ENCODE measurements at regions of chr11 and their contacts with region 1.

Region 1: DNA sequence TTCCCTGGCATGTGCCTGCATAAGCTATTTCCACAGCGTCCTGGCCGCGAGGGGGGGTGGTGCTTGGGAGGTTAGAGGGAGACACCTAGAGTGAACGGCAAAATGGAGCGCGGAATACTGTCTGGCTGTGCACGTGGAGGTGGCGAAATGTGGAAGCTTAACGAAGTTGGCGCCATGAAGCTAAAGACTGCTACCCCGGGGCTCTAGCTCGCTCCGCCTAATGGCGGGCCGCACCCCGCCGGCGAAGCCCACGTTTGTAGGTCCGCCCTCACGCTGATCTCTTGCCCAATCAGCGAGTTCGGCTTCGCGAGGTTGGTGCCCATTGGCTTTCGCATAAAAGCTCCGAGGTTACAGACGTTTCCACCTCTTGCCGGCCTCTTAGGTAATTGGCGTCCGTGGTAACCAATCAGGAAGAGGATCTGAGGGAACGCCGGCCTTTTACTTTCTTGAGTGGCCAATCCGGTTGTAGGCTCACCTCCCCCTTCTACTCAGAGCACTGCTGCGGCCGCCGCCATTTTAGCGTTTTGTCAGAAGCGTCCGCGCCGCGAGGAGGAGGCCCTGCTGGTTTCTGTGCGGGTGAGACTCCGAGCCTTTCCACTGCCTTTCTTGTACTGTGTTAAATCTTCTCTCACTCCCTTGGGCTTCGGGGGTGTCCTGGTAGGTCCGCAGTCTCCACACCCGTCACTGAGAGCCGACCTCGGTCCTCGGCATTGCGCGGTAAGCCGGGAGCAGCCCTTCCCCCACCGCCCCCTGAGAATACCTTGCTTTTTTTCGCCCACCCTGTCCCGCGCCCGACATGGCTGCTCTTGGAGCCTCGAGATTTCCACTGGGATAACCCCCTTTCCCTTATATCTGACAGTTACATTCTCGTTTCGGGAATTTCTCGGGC is at the start of gene RBM4:
- DNase-seq: peak; percentile 90 to 99 (median 94)
- ATAC-seq: peak; percentile 89
- H3K4me3 ChIP-seq: peak within 1 kb of the TSS; percentile 82
- H3K4me3 Mint-ChIP-seq: peak within 1 kb of the TSS; percentile 97
- H3K27ac ChIP-seq: peak within 1 kb of the TSS; percentile 94
- H3K27ac Mint-ChIP-seq: peak within 1 kb of the TSS; percentile 89
- H3K4me1 ChIP-seq: peaks cover 62% of the 10 kb centered on the region
- H3K4me1 Mint-ChIP-seq: peaks cover 73% of the 10 kb centered on the region
- H3K27me3 ChIP-seq: no peaks in the 10 kb centered on the region
- H3K27me3 Mint-ChIP-seq: no peaks in the 10 kb centered on the region
- CTCF ChIP-seq: no peak
- total RNA-seq, gene RBM4: 194 to 197 TPM

Region 2: GRCh38 chr11:66454249-66454648 is 184.2 kb before region 1 on chr11:
- CTCF ChIA-PET with region 1: no interaction called
- POLR2A ChIA-PET with region 1: no interaction called
- intact Hi-C with region 1: no loop called
- DNase-seq: peak in 1 of 14 experiments; percentile 19
- ATAC-seq: no peak
- H3K4me3 ChIP-seq: no peak overlapping the region
- H3K4me3 Mint-ChIP-seq: no peak overlapping the region
- H3K27ac ChIP-seq: no peak overlapping the region
- H3K27ac Mint-ChIP-seq: no peak overlapping the region
- H3K4me1 ChIP-seq: peaks cover 10% of the 10 kb centered on the region
- H3K4me1 Mint-ChIP-seq: peaks cover 14% of the 10 kb centered on the region
- H3K27me3 ChIP-seq: no peaks in the 10 kb centered on the region
- H3K27me3 Mint-ChIP-seq: peaks cover 8% of the 10 kb centered on the region
- CTCF ChIP-seq: no peak

Region 3: DNA sequence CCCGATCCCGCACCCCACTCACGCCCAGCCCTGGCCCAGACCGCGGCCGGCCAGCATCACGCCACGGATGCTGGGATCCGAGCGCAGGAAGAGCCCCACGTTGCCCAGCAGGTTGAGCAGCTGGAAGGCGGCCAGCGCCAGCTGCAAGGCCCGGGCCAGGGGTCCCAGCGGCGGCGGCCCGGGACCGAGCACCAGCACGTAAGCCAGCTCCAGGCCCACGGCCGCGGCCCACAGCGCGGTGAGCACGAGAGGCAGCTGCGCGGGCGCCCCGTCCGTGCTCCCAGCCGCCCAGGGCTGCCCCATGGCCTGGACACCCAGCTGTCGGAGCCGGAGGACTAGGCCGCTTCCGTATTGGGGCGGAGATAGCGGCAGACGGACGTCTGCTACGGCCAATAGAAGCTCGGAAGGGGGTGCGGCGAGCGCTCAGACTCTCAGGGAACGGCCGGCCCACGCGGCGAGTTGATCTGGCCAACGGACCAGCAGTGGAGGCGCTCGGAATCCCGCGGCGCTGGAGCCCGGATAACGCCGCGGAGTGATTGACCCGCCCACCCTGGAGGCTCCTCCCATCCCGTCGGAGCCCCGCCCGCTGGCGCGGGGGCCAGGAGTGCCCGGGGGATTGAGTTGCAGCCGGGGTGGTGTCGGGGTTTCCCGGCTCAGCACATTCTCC is 92.6 kb before region 1 on chr11 and contains the start of gene ZDHHC24:
- CTCF ChIA-PET with region 1: interaction called, 3 read pairs
- POLR2A ChIA-PET with region 1: interaction called, 26 read pairs
- intact Hi-C with region 1: no loop called
- DNase-seq: peak; percentile 59 to 92 (median 73)
- ATAC-seq: peak; percentile 82
- H3K4me3 ChIP-seq: peak within 1 kb of the TSS; percentile 76
- H3K4me3 Mint-ChIP-seq: peak within 1 kb of the TSS; percentile 90
- H3K27ac ChIP-seq: peak within 1 kb of the TSS; percentile 69 to 70
- H3K27ac Mint-ChIP-seq: peak within 1 kb of the TSS; percentile 75
- H3K4me1 ChIP-seq: peaks cover 44% of the 10 kb centered on the region
- H3K4me1 Mint-ChIP-seq: peaks cover 39% of the 10 kb centered on the region
- H3K27me3 ChIP-seq: no peaks in the 10 kb centered on the region
- H3K27me3 Mint-ChIP-seq: no peaks in the 10 kb centered on the region
- CTCF ChIP-seq: no peak
- total RNA-seq, gene ZDHHC24: 17.0 to 18.4 TPM

Region 4: GRCh38 chr11:66579017-66579606 is 59.3 kb before region 1 on chr11:
- CTCF ChIA-PET with region 1: no interaction called
- POLR2A ChIA-PET with region 1: interaction called, 3 read pairs
- intact Hi-C with region 1: loop called in 1 of 2 experiments (anchors 2 kb)
- DNase-seq: peak; percentile 60 to 89 (median 72)
- ATAC-seq: peak; percentile 82
- H3K4me3 ChIP-seq: no peak overlapping the region
- H3K4me3 Mint-ChIP-seq: no peak overlapping the region
- H3K27ac ChIP-seq: no peak overlapping the region
- H3K27ac Mint-ChIP-seq: no peak overlapping the region
- H3K4me1 ChIP-seq: peaks cover 8% of the 10 kb centered on the region
- H3K4me1 Mint-ChIP-seq: peaks cover 8% of the 10 kb centered on the region
- H3K27me3 ChIP-seq: no peaks in the 10 kb centered on the region
- H3K27me3 Mint-ChIP-seq: peaks cover 6% of the 10 kb centered on the region
- CTCF ChIP-seq: peak; percentile 85

Region 5: GRCh38 chr11:66616379-66617154 is 21.9 kb before region 1 on chr11 and contains the start of gene RBM14:
- CTCF ChIA-PET with region 1: interaction called, 47 read pairs
- POLR2A ChIA-PET with region 1: interaction called, 511 read pairs
- intact Hi-C with region 1: loop called (anchors 1 kb)
- DNase-seq: peak; percentile 95 to 100 (median 97)
- ATAC-seq: peak; percentile 81
- H3K4me3 ChIP-seq: peak within 1 kb of the TSS; percentile 99
- H3K4me3 Mint-ChIP-seq: peak within 1 kb of the TSS; percentile 99
- H3K27ac ChIP-seq: peak within 1 kb of the TSS; percentile 96 to 98
- H3K27ac Mint-ChIP-seq: peak within 1 kb of the TSS; percentile 94
- H3K4me1 ChIP-seq: peaks cover 50% of the 10 kb centered on the region
- H3K4me1 Mint-ChIP-seq: peaks cover 53% of the 10 kb centered on the region
- H3K27me3 ChIP-seq: no peaks in the 10 kb centered on the region
- H3K27me3 Mint-ChIP-seq: no peaks in the 10 kb centered on the region
- CTCF ChIP-seq: no peak
- total RNA-seq, gene RBM14: 239 to 250 TPM

Region 6: GRCh38 chr11:66663741-66664296 is 25.4 kb after region 1 on chr11:
- CTCF ChIA-PET with region 1: no interaction called
- POLR2A ChIA-PET with region 1: interaction called, 16 read pairs
- intact Hi-C with region 1: no loop called
- DNase-seq: no peak
- ATAC-seq: no peak
- H3K4me3 ChIP-seq: no peak overlapping the region
- H3K4me3 Mint-ChIP-seq: no peak overlapping the region
- H3K27ac ChIP-seq: no peak overlapping the region
- H3K27ac Mint-ChIP-seq: peak overlapping the region; percentile 20
- H3K4me1 ChIP-seq: peaks cover 2% of the 10 kb centered on the region
- H3K4me1 Mint-ChIP-seq: peaks cover 48% of the 10 kb centered on the region
- H3K27me3 ChIP-seq: no peaks in the 10 kb centered on the region
- H3K27me3 Mint-ChIP-seq: no peaks in the 10 kb centered on the region
- CTCF ChIP-seq: no peak

Region 7: GRCh38 chr11:66864924-66865697 is 226.7 kb after region 1 on chr11:
- CTCF ChIA-PET with region 1: no interaction called
- POLR2A ChIA-PET with region 1: no interaction called
- intact Hi-C with region 1: no loop called
- DNase-seq: no peak
- ATAC-seq: no peak
- H3K4me3 ChIP-seq: no peak overlapping the region
- H3K4me3 Mint-ChIP-seq: no peak overlapping the region
- H3K27ac ChIP-seq: no peak overlapping the region
- H3K27ac Mint-ChIP-seq: no peak overlapping the region
- H3K4me1 ChIP-seq: peaks cover 8% of the 10 kb centered on the region
- H3K4me1 Mint-ChIP-seq: peaks cover 11% of the 10 kb centered on the region
- H3K27me3 ChIP-seq: no peaks in the 10 kb centered on the region
- H3K27me3 Mint-ChIP-seq: no peaks in the 10 kb centered on the region
- CTCF ChIP-seq: no peak